ENCODE measurements at regions of chr1 and their contacts with region 1.

Region 1: GRCh38 chr1:160376525-160377131 is 9.8 kb downstream of the NHLH1 start:
- DNase-seq: no peak
- H3K4me3 ChIP-seq: no peak overlapping the region
- H3K27ac ChIP-seq: no peak overlapping the region
- H3K4me1 ChIP-seq: peaks cover 4% of the 10 kb centered on the region
- H3K27me3 ChIP-seq: no peaks in the 10 kb centered on the region
- CTCF ChIP-seq: peak in 3 of 4 experiments; percentile 56 to 83 (median 81)
- POLR2A ChIP-seq: no peak

Region 2: GRCh38 chr1:160205242-160206035 is 171.2 kb before region 1 on chr1 and contains the start of gene PEA15:
- intact Hi-C with region 1: loop called (anchors 10 kb)
- DNase-seq: peak; percentile 69
- H3K4me3 ChIP-seq: peak within 1 kb of the TSS; percentile 88 to 91
- H3K27ac ChIP-seq: peak within 1 kb of the TSS; percentile 90 to 93
- H3K4me1 ChIP-seq: peaks cover 13% of the 10 kb centered on the region
- H3K27me3 ChIP-seq: no peaks in the 10 kb centered on the region
- CTCF ChIP-seq: no peak
- POLR2A ChIP-seq: peak; percentile 82
- total RNA-seq, gene PEA15: 50.4 to 184 TPM